ENCODE measurements at regions of chr16 and their contacts with region 1.

Region 1: DNA sequence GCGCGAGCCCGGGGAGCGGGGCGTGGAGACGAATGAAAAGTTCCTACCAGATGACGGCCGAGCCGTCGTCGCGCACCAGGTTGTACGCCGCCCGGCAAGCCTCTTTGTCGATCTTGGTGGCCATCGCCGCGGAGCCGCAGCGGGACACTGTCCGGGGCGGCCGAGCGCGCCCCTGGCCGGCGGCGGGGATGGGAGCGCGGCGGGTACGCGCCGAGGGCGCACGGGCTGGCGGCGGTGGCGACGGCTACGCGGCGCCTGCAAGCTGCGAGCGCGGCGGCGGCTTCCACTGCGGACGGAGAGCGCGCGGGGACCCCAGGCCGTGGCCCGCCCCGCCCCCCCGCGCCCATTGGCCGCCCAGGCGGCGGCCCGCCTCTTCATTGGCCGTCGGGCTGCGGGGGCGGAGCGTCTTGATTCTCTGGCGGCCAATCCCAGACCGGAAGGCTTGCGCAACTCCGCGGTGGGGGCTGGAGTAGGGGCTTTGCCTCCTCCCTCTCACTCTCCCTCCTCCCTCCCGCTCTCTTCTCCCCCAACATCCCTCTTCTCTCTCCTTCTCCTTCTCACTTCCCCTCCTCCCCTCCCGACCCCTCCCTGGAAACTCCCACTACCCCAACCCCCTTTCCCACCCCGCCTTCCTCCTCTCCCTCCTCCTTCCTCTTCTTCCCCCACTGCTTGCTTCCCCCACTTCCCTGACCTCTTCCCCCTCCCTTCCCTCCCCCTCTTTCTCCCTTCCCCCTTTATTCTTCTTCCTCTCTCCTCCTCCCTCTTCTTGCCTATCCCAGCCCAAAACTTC is at the start of gene COTL1:
- DNase-seq: peak; percentile 95
- ATAC-seq: peak; percentile 79
- H3K4me3 Mint-ChIP-seq: peak within 1 kb of the TSS; percentile 96
- H3K27ac Mint-ChIP-seq: peak within 1 kb of the TSS; percentile 87
- H3K4me1 Mint-ChIP-seq: peaks cover 48% of the 10 kb centered on the region
- H3K27me3 Mint-ChIP-seq: peaks cover 1% of the 10 kb centered on the region
- total RNA-seq, gene COTL1: 657 to 664 TPM

Region 2: GRCh38 chr16:84548971-84549844 is 68.8 kb before region 1 on chr16:
- POLR2A ChIA-PET with region 1: interaction called, 81 read pairs
- DNase-seq: peak; percentile 63
- ATAC-seq: peak; percentile 48
- H3K4me3 Mint-ChIP-seq: peak overlapping the region; percentile 87
- H3K27ac Mint-ChIP-seq: peak overlapping the region; percentile 92
- H3K4me1 Mint-ChIP-seq: peaks cover 47% of the 10 kb centered on the region
- H3K27me3 Mint-ChIP-seq: no peaks in the 10 kb centered on the region

Region 3: DNA sequence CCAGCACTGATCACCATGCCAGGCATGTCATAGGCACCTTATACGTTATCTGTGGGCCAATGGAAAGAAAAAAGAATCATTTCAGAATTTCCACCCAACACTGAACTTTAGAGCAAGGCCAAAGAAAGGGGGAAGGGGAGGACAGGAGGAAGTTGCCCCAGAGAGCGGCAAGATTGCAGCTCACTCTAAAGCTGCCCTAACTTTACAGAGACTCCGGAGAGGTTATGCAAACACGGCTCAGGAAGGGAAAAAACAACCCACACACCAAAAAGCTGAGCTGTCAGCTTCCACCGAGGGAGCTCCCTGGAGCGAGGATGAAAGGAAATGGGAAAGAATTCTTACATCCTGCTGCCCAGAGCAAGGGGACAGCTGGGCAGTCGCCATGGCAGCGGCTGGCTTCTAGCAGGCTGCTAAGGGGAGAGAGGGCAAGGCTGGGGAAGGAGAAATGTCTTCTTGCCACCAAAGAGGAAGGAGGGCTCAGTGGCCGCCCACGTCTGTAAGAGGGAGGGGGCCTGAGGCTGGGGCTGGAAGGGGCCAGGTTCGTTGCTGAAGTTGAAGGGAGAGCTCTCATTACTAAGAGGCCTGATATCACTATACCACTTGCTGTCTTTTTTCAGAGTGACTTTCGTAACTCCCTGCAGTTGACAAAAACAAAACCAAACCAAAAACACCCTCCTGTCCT is 18.3 kb before region 1 on chr16:
- POLR2A ChIA-PET with region 1: interaction called, 105 read pairs
- DNase-seq: peak; percentile 63
- ATAC-seq: peak; percentile 37
- H3K4me3 Mint-ChIP-seq: peak overlapping the region; percentile 80
- H3K27ac Mint-ChIP-seq: peak overlapping the region; percentile 92
- H3K4me1 Mint-ChIP-seq: peaks cover 75% of the 10 kb centered on the region
- H3K27me3 Mint-ChIP-seq: no peaks in the 10 kb centered on the region

Region 4: GRCh38 chr16:84607694-84608093 is 10.3 kb before region 1 on chr16:
- POLR2A ChIA-PET with region 1: interaction called, 105 read pairs
- DNase-seq: no peak
- ATAC-seq: peak; percentile 55
- H3K4me3 Mint-ChIP-seq: peak overlapping the region; percentile 68
- H3K27ac Mint-ChIP-seq: peak overlapping the region; percentile 75
- H3K4me1 Mint-ChIP-seq: peaks cover 80% of the 10 kb centered on the region
- H3K27me3 Mint-ChIP-seq: no peaks in the 10 kb centered on the region

Region 5: GRCh38 chr16:84633622-84634021 is 15.6 kb after region 1 on chr16:
- POLR2A ChIA-PET with region 1: no interaction called
- DNase-seq: no peak
- ATAC-seq: no peak
- H3K4me3 Mint-ChIP-seq: no peak overlapping the region
- H3K27ac Mint-ChIP-seq: no peak overlapping the region
- H3K4me1 Mint-ChIP-seq: peaks cover 38% of the 10 kb centered on the region
- H3K27me3 Mint-ChIP-seq: peaks cover 29% of the 10 kb centered on the region

Measured in activated naive CD8-positive, alpha-beta T cell treated with anti-CD3 and anti-CD28 coated beads, Interleukin-2, amount 10 ng/mL, durations not matched to agents 7 days and 5 days (primary cell).